A549 (cell line): ENCODE measurements at regions of chr19 and their contacts with region 1.

Region 1: GRCh38 chr19:46056536-46056935 is 15.7 kb upstream of the IGFL4 start:
- DNase-seq: peak in 1 of 2 experiments; percentile 27
- ATAC-seq: peak in 1 of 2 experiments; percentile 30; a peak in 2 of 6 replicates
- H3K4me3 ChIP-seq: no peak overlapping the region
- H3K27ac ChIP-seq: peak overlapping the region in 1 of 2 experiments; percentile 51; a peak in 2 of 6 replicates
- H3K4me1 ChIP-seq: peaks cover 8% of the 10 kb centered on the region; the same call in 2 of the 3 replicates
- CTCF ChIP-seq: no peak
- EP300 ChIP-seq: no peak
- POLR2A ChIP-seq: no peak
- RAD21 ChIP-seq: no peak

Region 2: DNA sequence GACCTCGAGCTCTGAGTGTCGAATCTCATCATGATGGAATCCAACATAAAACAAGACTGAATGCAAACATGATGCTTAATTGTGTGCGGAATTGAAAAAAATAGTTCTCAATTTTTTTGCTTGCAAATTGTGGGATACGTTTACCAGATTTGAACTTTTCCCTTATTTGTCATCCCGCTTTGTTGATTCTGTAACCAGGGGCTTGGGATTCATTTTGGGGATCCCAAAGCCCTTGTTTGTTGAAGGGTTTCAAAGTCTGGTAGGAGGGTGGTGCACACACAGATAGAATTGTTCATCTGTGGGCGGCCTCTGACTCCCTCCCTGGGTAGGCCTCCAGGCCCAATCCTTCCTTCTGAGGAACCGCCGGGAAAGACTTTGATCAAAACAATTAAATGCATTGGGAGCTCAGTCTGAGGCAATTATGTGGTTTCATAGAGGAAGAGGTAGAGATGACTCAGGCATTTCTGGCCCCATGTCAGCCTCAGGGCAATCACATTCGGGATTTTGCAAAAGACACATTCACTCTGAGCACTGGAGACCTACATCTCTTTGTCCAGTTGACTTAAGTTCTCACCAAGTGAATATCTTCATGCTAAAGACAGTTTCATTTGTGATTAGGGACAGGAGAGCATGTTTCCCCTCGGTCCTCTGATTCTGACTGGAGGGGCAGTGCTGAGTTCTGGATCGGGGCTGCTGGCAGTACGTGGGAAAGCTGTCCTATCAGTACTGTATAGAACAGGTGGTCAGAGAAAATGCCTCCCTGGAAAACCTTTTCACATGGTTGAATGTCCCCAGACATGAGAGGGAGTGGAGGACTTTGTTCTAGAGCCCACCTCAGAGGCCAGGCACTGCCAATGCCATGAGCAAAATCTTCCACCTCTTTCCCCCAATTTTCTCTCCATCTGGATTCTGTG is 12.1 kb after region 1 on chr19:
- CTCF ChIA-PET with region 1: interaction called, 17 read pairs
- POLR2A ChIA-PET with region 1: interaction called, 4 read pairs
- DNase-seq: peak; percentile 68 to 72
- ATAC-seq: peak; percentile 71 to 73
- H3K4me3 ChIP-seq: no peak overlapping the region
- H3K27ac ChIP-seq: peak overlapping the region; percentile 87 to 89
- H3K4me1 ChIP-seq: peaks cover 68% of the 10 kb centered on the region
- CTCF ChIP-seq: no peak
- EP300 ChIP-seq: peak; percentile 89 to 96; a peak in 4 of 5 replicates
- POLR2A ChIP-seq: no peak
- RAD21 ChIP-seq: peak in 1 of 2 experiments; percentile 36; a peak in 1 of 5 replicates

Region 3: GRCh38 chr19:46089432-46089831 is 32.9 kb after region 1 on chr19:
- CTCF ChIA-PET with region 1: no interaction called
- POLR2A ChIA-PET with region 1: no interaction called
- DNase-seq: no peak
- ATAC-seq: no peak
- H3K4me3 ChIP-seq: no peak overlapping the region
- H3K27ac ChIP-seq: no peak overlapping the region
- H3K4me1 ChIP-seq: no peaks in the 10 kb centered on the region
- CTCF ChIP-seq: no peak
- EP300 ChIP-seq: no peak
- POLR2A ChIP-seq: no peak
- RAD21 ChIP-seq: no peak

Region 4: DNA sequence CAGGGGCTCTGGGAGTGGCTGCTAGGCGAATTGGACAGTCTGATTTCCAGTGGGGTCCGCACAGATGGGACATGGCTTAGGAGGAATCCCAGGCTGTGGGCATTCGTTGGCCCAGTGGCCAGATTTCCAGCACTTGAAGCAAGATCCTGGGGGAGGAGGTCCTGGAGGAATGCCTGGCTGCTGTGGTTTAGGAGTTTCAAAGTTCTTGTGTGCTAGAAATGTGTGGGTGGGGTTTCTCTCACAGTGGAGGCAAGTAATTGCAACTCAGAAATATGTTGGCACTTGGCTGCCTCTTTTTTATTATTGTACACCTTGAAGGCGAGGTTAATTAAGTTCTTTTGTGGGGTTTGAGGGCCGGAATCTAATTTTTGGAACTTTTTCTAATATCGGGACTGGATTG is 50.8 kb after region 1 on chr19:
- CTCF ChIA-PET with region 1: no interaction called
- POLR2A ChIA-PET with region 1: no interaction called
- DNase-seq: no peak
- ATAC-seq: no peak
- H3K4me3 ChIP-seq: no peak overlapping the region
- H3K27ac ChIP-seq: no peak overlapping the region
- H3K4me1 ChIP-seq: peaks cover 5% of the 10 kb centered on the region; the same call in 1 of the 3 replicates
- CTCF ChIP-seq: no peak
- EP300 ChIP-seq: no peak
- POLR2A ChIP-seq: no peak
- RAD21 ChIP-seq: no peak